ENCODE measurements at regions of chr6 and their contacts with region 1.

Region 1: GRCh38 chr6:137975188-137975940 is 108.3 kb downstream of the TNFAIP3 start:
- DNase-seq: peak in 4 of 5 donors; percentile 31 to 77 (median 54)
- H3K4me3 ChIP-seq: peak overlapping the region; percentile 33
- H3K4me3 Mint-ChIP-seq: peak overlapping the region; percentile 69 to 88 (median 81)
- H3K27ac ChIP-seq: peak overlapping the region; percentile 21
- H3K27ac Mint-ChIP-seq: peak overlapping the region; percentile 81 to 99 (median 97)
- H3K4me1 ChIP-seq: peaks cover 24% of the 10 kb centered on the region
- H3K4me1 Mint-ChIP-seq: peaks cover 65 to 75% (median 73%) of the 10 kb centered on the region in 3 donors
- H3K27me3 ChIP-seq: no peaks in the 10 kb centered on the region
- H3K27me3 Mint-ChIP-seq: no peaks in the 10 kb centered on the region

Region 2: GRCh38 chr6:137707590-137708360 is 267.6 kb before region 1 on chr6:
- CTCF ChIA-PET with region 1: interaction called, 24 read pairs
- POLR2A ChIA-PET with region 1: interaction called, 5 read pairs
- DNase-seq: peak; percentile 74 to 96 (median 92)
- H3K4me3 ChIP-seq: peak overlapping the region; percentile 20
- H3K4me3 Mint-ChIP-seq: peak overlapping the region; percentile 38 to 78 (median 75)
- H3K27ac ChIP-seq: peak overlapping the region; percentile 72
- H3K27ac Mint-ChIP-seq: peak overlapping the region; percentile 90 to 99 (median 97)
- H3K4me1 ChIP-seq: peaks cover 47% of the 10 kb centered on the region
- H3K4me1 Mint-ChIP-seq: peaks cover 50 to 75% (median 72%) of the 10 kb centered on the region in 3 donors
- H3K27me3 ChIP-seq: no peaks in the 10 kb centered on the region
- H3K27me3 Mint-ChIP-seq: peaks cover 0 to 7% of the 10 kb centered on the region in 2 donors

Region 3: GRCh38 chr6:137846772-137847313 is 128.5 kb before region 1 on chr6:
- CTCF ChIA-PET with region 1: no interaction called
- POLR2A ChIA-PET with region 1: no interaction called
- DNase-seq: no peak
- H3K4me3 ChIP-seq: no peak overlapping the region
- H3K4me3 Mint-ChIP-seq: no peak overlapping the region
- H3K27ac ChIP-seq: no peak overlapping the region
- H3K27ac Mint-ChIP-seq: no peak overlapping the region
- H3K4me1 ChIP-seq: peaks cover 5% of the 10 kb centered on the region
- H3K4me1 Mint-ChIP-seq: no peaks in the 10 kb centered on the region
- H3K27me3 ChIP-seq: no peaks in the 10 kb centered on the region
- H3K27me3 Mint-ChIP-seq: peaks cover 0 to 3% of the 10 kb centered on the region in 2 donors

Measured in CD8-positive, alpha-beta memory T cell (primary cell).